ENCODE measurements at regions of chr1 and their contacts with region 1.

Region 1: GRCh38 chr1:51578383-51579082 is 38.4 kb upstream of the OSBPL9 start:
- DNase-seq: no peak
- H3K4me3 ChIP-seq: no peak overlapping the region
- H3K27ac ChIP-seq: no peak overlapping the region
- H3K4me1 ChIP-seq: peaks cover 8% of the 10 kb centered on the region
- H3K27me3 ChIP-seq: no peaks in the 10 kb centered on the region
- CTCF ChIP-seq: no peak

Region 2: DNA sequence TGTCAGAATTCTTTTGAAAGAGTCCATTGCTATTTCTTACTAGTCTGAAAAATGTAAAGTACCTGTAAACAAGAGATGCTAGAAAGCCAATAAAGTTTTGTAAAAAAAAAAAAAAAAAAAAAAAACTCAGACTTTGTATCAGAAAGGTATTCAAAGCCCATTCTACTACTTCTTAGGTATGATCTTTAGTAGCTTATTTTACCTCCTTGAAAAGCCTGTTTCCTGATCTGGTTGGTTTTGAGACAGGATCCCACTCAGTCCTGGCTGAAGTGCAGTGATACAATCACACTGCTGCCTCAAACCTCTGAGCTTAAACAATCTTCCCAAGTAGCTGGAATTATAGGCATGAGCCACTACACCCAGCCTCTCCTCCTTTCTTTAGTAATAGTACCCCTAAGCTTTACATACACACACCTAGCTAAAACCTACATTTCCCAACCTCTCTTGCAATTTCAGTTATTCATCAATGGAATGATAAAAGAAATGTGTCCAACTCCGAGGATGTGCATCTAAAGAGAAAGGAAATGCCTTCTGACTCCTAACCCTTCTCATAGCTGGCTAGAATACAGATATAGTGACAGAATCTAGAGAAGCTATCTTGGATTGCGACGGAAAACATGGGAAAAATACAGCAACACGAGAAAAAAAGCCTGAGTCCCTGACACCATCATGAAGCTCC is 90.0 kb before region 1 on chr1:
- CTCF ChIA-PET with region 1: no interaction called
- dilution Hi-C with region 1: loop called (anchors 5 kb)
- in situ Hi-C with region 1: no loop called
- intact Hi-C with region 1: no loop called
- DNase-seq: peak; percentile 9
- H3K4me3 ChIP-seq: no peak overlapping the region
- H3K27ac ChIP-seq: no peak overlapping the region
- H3K4me1 ChIP-seq: peaks cover 5% of the 10 kb centered on the region
- H3K27me3 ChIP-seq: no peaks in the 10 kb centered on the region
- CTCF ChIP-seq: no peak

Measured in mammary epithelial cell (primary cell).